Heart left ventricle (tissue), 16 donors: ENCODE measurements at regions of chr1 and their contacts with region 1.

Region 1: DNA sequence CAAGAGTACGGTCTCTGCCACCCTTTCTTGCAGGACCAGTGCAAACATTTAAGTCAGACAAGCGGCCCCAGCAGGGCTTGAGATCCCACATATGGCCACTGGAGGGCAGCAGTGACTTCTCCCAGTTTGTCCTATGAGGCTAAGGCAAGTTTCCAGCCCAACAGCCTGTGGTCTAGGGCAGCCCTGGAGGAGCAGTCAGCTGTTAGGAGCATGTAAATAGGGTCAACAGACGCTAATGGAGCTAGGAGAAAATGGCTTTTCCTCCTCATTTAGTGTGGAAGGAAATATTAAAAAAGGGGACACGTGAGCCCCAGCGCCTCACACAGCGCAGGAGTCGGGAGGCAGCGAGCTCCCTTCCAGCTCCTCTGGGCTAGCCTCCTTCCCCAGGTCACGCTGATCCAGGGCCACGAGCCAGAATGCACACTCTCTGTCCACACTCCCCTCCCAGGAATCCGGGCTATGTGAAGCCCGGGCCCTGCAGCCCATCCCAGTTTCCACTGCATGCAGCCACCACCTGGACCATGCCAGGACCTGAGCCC is 95.6 kb downstream of the LAMC2 start:
- DNase-seq: peak; percentile 90 to 95 (median 90)
- ATAC-seq: peak; percentile 87 to 94 (median 91)
- H3K4me3 ChIP-seq: peak overlapping the region in 3 of 12 donors; percentile 24 to 27 (median 25)
- H3K27ac ChIP-seq: peak overlapping the region; percentile 64 to 94 (median 82)
- H3K4me1 ChIP-seq: peaks cover 0 to 62% (median 44%) of the 10 kb centered on the region in 12 donors
- H3K27me3 ChIP-seq: no peaks in the 10 kb centered on the region
- CTCF ChIP-seq: peak; percentile 91 to 98 (median 96)
- POLR2A ChIP-seq: no peak

Region 2: DNA sequence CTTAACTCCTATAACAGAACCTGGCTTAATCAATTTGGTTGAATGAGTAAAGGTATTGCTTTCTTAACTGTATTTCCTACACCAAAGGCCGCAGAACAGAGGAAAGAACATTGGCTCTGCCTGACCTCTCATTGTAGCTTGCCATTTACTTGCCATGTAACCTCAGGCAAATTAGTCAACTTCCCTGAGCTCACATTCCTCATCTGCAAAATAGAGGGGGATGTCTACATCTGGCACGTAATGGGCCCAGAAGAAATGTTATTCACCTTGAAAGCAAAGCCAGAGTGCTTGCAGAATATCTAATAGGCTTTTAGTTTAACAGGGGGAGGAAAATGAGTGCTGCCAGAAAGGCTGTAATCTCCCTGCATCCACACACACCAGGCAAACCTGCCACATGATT is 51.2 kb before region 1 on chr1:
- intact Hi-C with region 1: no loop called
- DNase-seq: no peak
- ATAC-seq: no peak
- H3K4me3 ChIP-seq: no peak overlapping the region
- H3K27ac ChIP-seq: no peak overlapping the region
- H3K4me1 ChIP-seq: peaks cover 0 to 21% (median 7%) of the 10 kb centered on the region in 12 donors
- H3K27me3 ChIP-seq: no peaks in the 10 kb centered on the region
- CTCF ChIP-seq: no peak
- POLR2A ChIP-seq: no peak

Region 3: GRCh38 chr1:183263886-183264593 is 17.6 kb before region 1 on chr1:
- intact Hi-C with region 1: loop called in 1 of 10 experiments (anchors 2 kb)
- DNase-seq: no peak
- ATAC-seq: no peak
- H3K4me3 ChIP-seq: no peak overlapping the region
- H3K27ac ChIP-seq: no peak overlapping the region
- H3K4me1 ChIP-seq: peaks cover 0 to 14% (median 2%) of the 10 kb centered on the region in 12 donors
- H3K27me3 ChIP-seq: no peaks in the 10 kb centered on the region
- CTCF ChIP-seq: no peak
- POLR2A ChIP-seq: no peak

Region 4: GRCh38 chr1:183318433-183318832 is 36.8 kb after region 1 on chr1:
- intact Hi-C with region 1: loop called (anchors 1 to 2 kb)
- DNase-seq: peak; percentile 77 to 92 (median 82)
- ATAC-seq: peak; percentile 94 to 99 (median 97)
- H3K4me3 ChIP-seq: no peak overlapping the region
- H3K27ac ChIP-seq: peak overlapping the region; percentile 46 to 92 (median 82)
- H3K4me1 ChIP-seq: peaks cover 0 to 37% (median 25%) of the 10 kb centered on the region in 12 donors
- H3K27me3 ChIP-seq: no peaks in the 10 kb centered on the region
- CTCF ChIP-seq: peak; percentile 48 to 89 (median 72)
- POLR2A ChIP-seq: no peak

Region 5: GRCh38 chr1:183461350-183461749 is 179.7 kb after region 1 on chr1:
- intact Hi-C with region 1: loop called in 1 of 10 experiments (anchors 5 kb)
- DNase-seq: peak in 1 of 5 donors; percentile 15
- ATAC-seq: peak in 1 of 4 donors; percentile 39
- H3K4me3 ChIP-seq: no peak overlapping the region
- H3K27ac ChIP-seq: peak overlapping the region in 1 of 12 donors; percentile 11
- H3K4me1 ChIP-seq: peaks cover 0 to 21% (median 0%) of the 10 kb centered on the region in 12 donors
- H3K27me3 ChIP-seq: no peaks in the 10 kb centered on the region
- CTCF ChIP-seq: no peak
- POLR2A ChIP-seq: no peak

Region 6: DNA sequence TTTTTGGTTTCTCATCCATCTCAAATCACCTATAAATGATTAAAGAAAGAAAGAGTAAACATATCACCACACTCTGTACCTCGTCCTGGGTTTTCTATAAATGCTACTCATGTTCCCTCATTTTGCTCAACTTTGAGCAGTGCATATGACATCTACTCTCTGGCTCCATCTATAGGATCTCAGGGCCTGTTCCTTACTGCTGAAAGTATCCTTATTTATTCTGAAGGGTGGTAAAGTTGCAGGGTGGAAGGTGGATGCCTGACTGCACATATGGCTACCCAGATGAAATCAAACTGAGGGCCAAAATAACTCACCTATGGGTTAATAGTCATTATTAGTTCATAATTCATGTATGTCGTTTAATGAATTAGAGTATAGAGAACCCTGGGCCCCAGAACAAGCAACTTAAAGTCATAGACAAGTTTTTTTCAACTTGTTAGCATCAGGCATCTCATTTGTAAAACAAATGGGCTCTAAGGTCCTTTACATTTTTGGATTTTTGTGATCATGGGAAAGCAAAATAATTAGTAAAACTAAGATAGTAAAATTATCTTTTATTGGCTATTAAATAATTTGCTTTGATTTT is 262.1 kb after region 1 on chr1:
- intact Hi-C with region 1: loop called in 7 of 10 experiments (anchors 5 to 10 kb)
- DNase-seq: no peak
- ATAC-seq: peak; percentile 61 to 86 (median 78)
- H3K4me3 ChIP-seq: no peak overlapping the region
- H3K27ac ChIP-seq: peak overlapping the region in 3 of 12 donors; percentile 9 to 13 (median 10)
- H3K4me1 ChIP-seq: peaks cover 0 to 35% (median 10%) of the 10 kb centered on the region in 12 donors
- H3K27me3 ChIP-seq: no peaks in the 10 kb centered on the region
- CTCF ChIP-seq: peak; percentile 41 to 77 (median 60)
- POLR2A ChIP-seq: no peak

Region 7: GRCh38 chr1:183635606-183636333 is 354.1 kb after region 1 on chr1 and contains the start of gene ARPC5:
- intact Hi-C with region 1: loop called in 1 of 10 experiments (anchors 10 kb)
- DNase-seq: peak; percentile 97 to 99 (median 98)
- ATAC-seq: peak; percentile 95 to 97 (median 96)
- H3K4me3 ChIP-seq: peak within 1 kb of the TSS; percentile 66 to 97 (median 84)
- H3K27ac ChIP-seq: peak within 1 kb of the TSS; percentile 82 to 99 (median 94)
- H3K4me1 ChIP-seq: peaks cover 0 to 47% (median 34%) of the 10 kb centered on the region in 12 donors
- H3K27me3 ChIP-seq: no peaks in the 10 kb centered on the region
- CTCF ChIP-seq: no peak
- POLR2A ChIP-seq: peak; percentile 70 to 93
- total RNA-seq, gene ARPC5: 24.6 to 105 (median 31.3) TPM